ENCODE measurements at regions of chr5 and their contacts with region 1.

Region 1: DNA sequence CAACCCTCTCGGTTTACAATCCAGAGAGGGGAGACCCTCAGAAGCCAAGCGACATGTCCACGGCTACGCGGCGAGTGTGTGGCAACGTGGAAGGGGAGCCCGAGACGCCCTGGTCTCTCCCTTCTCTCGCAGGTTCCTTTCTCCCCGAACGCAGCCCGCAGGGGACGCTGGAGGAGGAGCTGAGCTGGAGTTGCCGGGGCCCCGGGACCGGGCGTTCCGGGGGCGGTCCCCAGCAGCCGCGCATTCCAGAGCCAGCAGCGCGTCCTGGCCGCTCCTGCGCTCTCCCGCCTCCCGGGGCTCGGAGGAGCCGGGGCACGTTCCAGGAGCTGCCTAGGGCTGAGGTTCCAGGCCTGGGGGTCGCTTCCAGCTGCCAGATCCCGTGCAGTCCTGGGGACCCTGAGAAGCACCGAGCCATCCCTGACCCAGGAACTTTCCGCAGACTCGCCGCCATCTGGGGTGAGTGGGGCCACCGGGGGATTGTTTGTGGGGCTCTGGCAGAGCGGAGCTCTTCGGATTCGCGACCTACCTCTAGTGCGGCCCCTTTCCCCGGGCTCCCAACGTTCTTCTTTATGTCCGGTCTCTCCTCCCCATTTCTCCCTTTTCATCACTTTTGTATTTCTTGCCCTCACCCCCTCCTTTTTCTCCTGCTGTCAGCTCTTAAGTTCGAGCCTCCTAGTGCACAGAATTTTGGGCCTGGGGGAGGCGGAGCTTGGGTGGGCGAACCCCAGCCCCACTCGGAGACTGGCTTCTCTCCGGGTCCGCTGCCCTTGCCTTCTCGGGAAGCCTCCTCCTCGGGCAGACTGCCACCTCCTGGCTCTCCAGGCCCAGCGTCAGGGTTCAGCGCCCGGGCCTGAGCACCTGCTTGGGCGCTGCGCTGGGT is at the start of gene SMIM3:
- DNase-seq: no peak
- H3K4me3 ChIP-seq: peak within 1 kb of the TSS; percentile 91
- CTCF ChIP-seq: peak; percentile 56

Region 2: DNA sequence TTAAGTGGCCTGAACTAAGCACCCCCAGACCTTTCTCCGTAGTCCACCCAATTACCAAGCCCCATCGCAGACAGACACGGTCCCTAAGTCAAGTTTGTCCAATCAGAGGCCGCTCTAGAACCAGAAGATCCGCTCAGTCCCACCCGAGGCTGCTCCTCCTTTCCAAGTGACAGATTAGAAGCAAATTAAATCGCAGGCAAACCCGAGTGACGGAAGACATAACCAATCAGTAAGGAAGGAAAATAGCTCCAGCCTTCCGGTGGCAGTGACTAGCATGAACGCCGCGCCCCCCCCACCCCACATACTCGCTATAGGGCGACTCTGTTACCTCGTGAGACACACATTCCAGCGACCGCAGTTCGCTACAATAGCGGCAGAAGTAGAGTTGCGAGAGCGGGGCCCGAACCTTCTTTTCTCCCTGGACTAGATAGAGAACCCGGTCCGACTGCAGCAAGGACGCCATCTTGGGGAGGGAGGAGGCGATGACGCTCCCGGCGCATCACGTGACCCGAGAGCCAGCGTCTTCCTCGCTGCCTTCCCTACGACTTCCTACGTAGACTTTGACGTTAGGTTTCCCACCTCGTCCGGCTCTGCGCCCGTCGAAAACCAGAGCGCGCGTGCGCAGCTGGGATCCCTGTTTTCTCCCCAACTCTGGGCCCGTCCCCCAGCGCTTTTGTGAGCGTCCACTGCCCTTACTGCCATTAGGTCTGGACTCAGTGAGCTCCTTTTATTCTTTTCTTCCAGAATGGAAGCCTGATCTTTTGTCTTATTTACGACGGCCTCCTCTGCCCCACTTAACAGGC is 20.0 kb before region 1 on chr5 and contains the start of gene DCTN4:
- CTCF ChIA-PET with region 1: interaction called, 8 read pairs
- POLR2A ChIA-PET with region 1: interaction called, 13 read pairs
- DNase-seq: peak; percentile 98
- H3K4me3 ChIP-seq: peak within 1 kb of the TSS; percentile 84
- CTCF ChIP-seq: no peak

Region 3: GRCh38 chr5:150789943-150790611 is 11.3 kb after region 1 on chr5:
- CTCF ChIA-PET with region 1: interaction called, 13 read pairs
- POLR2A ChIA-PET with region 1: interaction called, 35 read pairs
- DNase-seq: peak; percentile 99
- H3K4me3 ChIP-seq: peak overlapping the region; percentile 25; the same call in 1 of the 2 replicates
- CTCF ChIP-seq: no peak

Region 4: DNA sequence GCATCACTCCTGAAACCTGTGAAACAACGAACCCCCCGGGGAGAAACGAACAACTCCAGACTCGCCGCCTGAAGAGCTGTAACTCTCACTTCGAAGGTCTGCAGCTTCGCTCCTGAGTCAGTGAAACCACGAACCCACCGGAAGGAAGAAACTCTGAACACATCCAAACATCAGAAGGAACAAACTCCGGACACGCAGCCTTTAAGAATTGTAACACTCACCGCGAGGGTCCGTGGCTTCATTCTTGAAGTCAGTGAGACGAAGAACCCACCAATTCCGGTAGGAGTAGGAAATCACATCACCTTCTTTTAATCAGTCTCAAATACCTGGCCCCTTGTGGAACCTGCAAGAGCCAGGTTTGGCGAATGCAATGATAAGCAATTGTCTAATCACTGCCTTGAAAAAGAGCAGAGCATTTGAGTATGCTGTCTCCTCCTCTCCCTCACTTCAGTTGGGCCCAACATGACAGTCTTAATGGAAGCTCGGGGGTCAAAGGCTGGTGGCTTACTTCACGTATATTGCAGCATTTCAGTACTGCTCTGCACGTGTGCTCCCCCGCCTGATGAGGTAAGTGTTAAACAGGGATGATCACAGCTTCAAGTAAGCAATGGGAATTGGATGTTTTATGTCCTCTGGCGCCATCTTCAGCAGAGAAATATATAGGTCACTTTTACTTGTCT is 68.0 kb after region 1 on chr5:
- CTCF ChIA-PET with region 1: interaction called, 16 read pairs
- POLR2A ChIA-PET with region 1: no interaction called
- DNase-seq: peak; percentile 52
- H3K4me3 ChIP-seq: no peak overlapping the region
- CTCF ChIP-seq: peak; percentile 49

Measured in AG04449 (cell line).